OCI-LY7 (cell line): ENCODE measurements at regions of chr7 and their contacts with region 1.

Region 1: GRCh38 chr7:143214789-143215679 is 6.8 kb upstream of the TAS2R40 start:
- DNase-seq: peak; percentile 89
- H3K4me3 ChIP-seq: no peak overlapping the region
- H3K27ac ChIP-seq: no peak overlapping the region
- H3K4me1 ChIP-seq: no peaks in the 10 kb centered on the region
- CTCF ChIP-seq: peak; percentile 100

Region 2: GRCh38 chr7:142603870-142604448 is 611.1 kb before region 1 on chr7:
- CTCF ChIA-PET with region 1: no interaction called
- POLR2A ChIA-PET with region 1: no interaction called
- intact Hi-C with region 1: loop called (anchors 10 kb)
- DNase-seq: peak; percentile 73
- H3K4me3 ChIP-seq: peak overlapping the region; percentile 29
- H3K27ac ChIP-seq: no peak overlapping the region
- H3K4me1 ChIP-seq: no peaks in the 10 kb centered on the region
- CTCF ChIP-seq: peak; percentile 96

Region 3: DNA sequence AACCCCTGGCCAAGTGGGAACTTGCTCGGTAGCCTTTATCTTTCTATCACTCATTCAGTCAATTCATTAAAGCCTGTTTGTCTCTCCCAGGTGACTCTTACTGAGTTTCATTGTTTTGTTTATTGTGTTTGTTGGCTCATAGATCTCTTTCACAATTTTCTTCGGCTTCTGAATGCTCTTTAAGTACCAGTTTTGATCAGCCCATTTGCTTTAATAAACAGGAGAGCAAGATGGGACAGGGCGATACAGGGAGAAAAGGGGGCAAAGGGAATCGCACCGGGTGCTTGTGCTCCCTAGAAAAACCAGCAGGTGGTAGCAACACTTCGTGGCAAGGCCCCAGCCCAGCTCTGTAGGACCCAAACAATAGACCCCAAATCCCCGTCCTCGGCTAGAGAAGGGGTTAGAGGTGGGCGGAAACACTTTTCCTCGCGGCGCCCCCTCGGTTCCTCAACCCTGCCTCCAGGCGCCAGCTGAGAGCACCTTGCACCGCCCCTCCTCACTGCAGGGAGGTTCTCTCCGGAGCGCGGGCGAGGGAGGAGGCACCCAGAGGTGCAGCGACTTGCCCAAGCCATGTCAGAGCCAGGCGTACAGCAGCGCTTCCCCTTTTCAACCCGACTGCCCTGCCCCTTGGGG is 361.2 kb before region 1 on chr7:
- CTCF ChIA-PET with region 1: no interaction called
- POLR2A ChIA-PET with region 1: no interaction called
- intact Hi-C with region 1: loop called (anchors 2 kb)
- DNase-seq: peak; percentile 80
- H3K4me3 ChIP-seq: peak overlapping the region; percentile 73
- H3K27ac ChIP-seq: no peak overlapping the region
- H3K4me1 ChIP-seq: peaks cover 6% of the 10 kb centered on the region
- CTCF ChIP-seq: peak; percentile 90

Region 4: GRCh38 chr7:142880876-142881505 is 334.0 kb before region 1 on chr7:
- CTCF ChIA-PET with region 1: no interaction called
- POLR2A ChIA-PET with region 1: no interaction called
- intact Hi-C with region 1: loop called (anchors 1 kb)
- DNase-seq: peak; percentile 53
- H3K4me3 ChIP-seq: no peak overlapping the region
- H3K27ac ChIP-seq: no peak overlapping the region
- H3K4me1 ChIP-seq: no peaks in the 10 kb centered on the region
- CTCF ChIP-seq: peak; percentile 87

Region 5: DNA sequence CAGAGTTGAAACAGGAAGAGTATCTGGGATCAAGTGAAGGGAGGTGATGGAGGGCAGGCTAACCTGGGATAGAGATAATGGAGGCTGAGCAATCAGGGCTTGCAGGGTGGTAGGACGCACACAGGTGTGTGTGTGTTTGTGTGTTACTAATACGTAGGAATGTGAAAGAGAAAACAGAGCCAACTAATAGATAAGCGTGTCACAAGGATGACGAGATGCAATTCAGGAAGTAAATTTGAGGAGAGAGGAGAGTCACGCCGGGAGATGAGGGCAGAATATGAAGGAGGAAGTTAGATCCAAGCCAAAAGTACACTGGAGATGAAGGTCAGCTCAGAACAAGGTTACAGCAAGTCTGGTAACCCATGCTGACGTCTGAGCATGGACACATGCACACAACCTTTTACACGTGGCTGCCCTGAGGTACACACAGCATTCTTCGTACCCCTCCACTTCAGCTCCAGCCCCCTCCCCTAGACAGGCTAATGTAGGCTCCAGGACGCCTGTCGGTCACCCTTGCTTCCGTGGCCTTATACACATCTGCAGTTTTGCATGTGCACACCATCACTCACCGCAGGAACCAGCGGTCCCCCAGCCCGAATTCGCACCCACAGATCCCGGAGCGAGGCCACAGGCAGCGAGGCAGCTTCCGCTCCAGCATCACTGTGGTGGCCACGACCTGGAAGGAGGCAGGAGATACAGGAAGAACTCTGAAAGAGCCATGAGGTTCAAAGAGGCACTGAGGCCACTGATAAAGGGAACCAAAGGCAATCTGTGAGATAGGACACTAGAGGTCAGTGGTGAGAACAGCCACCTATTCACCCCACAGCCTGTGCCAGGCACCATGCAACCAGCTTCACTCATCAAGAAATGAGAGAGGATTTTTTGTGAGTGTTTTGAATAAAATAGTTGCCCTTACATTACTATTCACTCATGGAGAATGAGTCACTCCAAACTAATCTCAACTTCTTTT is 305.8 kb before region 1 on chr7:
- CTCF ChIA-PET with region 1: no interaction called
- POLR2A ChIA-PET with region 1: no interaction called
- intact Hi-C with region 1: loop called (anchors 1 kb)
- DNase-seq: peak; percentile 23
- H3K4me3 ChIP-seq: no peak overlapping the region
- H3K27ac ChIP-seq: no peak overlapping the region
- H3K4me1 ChIP-seq: no peaks in the 10 kb centered on the region
- CTCF ChIP-seq: peak; percentile 73

Region 6: GRCh38 chr7:143008007-143008901 is 206.8 kb before region 1 on chr7:
- CTCF ChIA-PET with region 1: interaction called, 15 read pairs
- POLR2A ChIA-PET with region 1: interaction called, 5 read pairs
- intact Hi-C with region 1: loop called (anchors 1 kb)
- DNase-seq: peak; percentile 77
- H3K4me3 ChIP-seq: no peak overlapping the region
- H3K27ac ChIP-seq: no peak overlapping the region
- H3K4me1 ChIP-seq: peaks cover 44% of the 10 kb centered on the region
- CTCF ChIP-seq: peak; percentile 99

Region 7: DNA sequence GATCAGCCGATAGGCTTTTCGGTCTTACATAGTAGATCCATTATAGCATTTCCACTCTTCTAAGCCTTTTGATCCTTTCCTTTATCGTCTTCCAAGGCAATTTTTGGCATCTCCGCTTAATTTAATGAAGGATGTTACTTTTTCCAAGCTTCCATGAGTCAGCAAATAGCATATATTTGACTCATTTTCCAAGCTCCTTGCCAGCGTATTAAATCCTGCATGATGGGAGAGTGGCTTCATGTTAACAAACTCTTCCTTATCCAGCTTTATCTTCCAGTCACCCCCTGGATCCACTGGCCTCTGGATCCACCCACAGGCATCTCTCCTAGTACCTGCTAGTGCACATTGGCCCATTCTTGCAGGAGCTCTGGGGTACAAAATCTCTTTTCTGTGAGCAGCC is 201.1 kb before region 1 on chr7:
- CTCF ChIA-PET with region 1: interaction called, 15 read pairs
- POLR2A ChIA-PET with region 1: interaction called, 5 read pairs
- intact Hi-C with region 1: no loop called
- DNase-seq: no peak
- H3K4me3 ChIP-seq: peak overlapping the region; percentile 6
- H3K27ac ChIP-seq: peak overlapping the region; percentile 45
- H3K4me1 ChIP-seq: peaks cover 79% of the 10 kb centered on the region
- CTCF ChIP-seq: no peak